HCT116 (cell line): ENCODE measurements at regions of chr11 and their contacts with region 1.

Region 1: GRCh38 chr11:2930704-2931428 is 1.6 kb upstream of the PHLDA2 start:
- DNase-seq: peak; percentile 86
- ATAC-seq: peak; percentile 64
- H3K4me3 ChIP-seq: peak overlapping the region; percentile 61 to 93
- H3K27ac ChIP-seq: peak overlapping the region; percentile 99
- H3K4me1 ChIP-seq: peaks cover 43 to 69% of the 10 kb centered on the region in 2 experiments
- H3K27me3 ChIP-seq: no peaks in the 10 kb centered on the region
- CTCF ChIP-seq: peak in 2 of 3 experiments; percentile 89 to 94; a peak in 4 of 6 replicates
- POLR2A ChIP-seq: no peak
- RAD21 ChIP-seq: no peak

Region 2: GRCh38 chr11:2532704-2533586 is 397.9 kb before region 1 on chr11:
- CTCF ChIA-PET with region 1: interaction called, 28 read pairs
- POLR2A ChIA-PET with region 1: interaction called, 17 read pairs
- RAD21 ChIA-PET with region 1: interaction called, 3 to 6 read pairs
- intact Hi-C with region 1: loop called (anchors 1 kb)
- DNase-seq: peak; percentile 89
- ATAC-seq: peak; percentile 72
- H3K4me3 ChIP-seq: peak overlapping the region; percentile 42 to 65
- H3K27ac ChIP-seq: peak overlapping the region; percentile 97
- H3K4me1 ChIP-seq: peaks cover 24 to 32% of the 10 kb centered on the region in 2 experiments
- H3K27me3 ChIP-seq: no peaks in the 10 kb centered on the region
- CTCF ChIP-seq: peak in 2 of 3 experiments; percentile 98 to 100; a peak in 4 of 6 replicates
- POLR2A ChIP-seq: no peak
- RAD21 ChIP-seq: no peak

Region 3: DNA sequence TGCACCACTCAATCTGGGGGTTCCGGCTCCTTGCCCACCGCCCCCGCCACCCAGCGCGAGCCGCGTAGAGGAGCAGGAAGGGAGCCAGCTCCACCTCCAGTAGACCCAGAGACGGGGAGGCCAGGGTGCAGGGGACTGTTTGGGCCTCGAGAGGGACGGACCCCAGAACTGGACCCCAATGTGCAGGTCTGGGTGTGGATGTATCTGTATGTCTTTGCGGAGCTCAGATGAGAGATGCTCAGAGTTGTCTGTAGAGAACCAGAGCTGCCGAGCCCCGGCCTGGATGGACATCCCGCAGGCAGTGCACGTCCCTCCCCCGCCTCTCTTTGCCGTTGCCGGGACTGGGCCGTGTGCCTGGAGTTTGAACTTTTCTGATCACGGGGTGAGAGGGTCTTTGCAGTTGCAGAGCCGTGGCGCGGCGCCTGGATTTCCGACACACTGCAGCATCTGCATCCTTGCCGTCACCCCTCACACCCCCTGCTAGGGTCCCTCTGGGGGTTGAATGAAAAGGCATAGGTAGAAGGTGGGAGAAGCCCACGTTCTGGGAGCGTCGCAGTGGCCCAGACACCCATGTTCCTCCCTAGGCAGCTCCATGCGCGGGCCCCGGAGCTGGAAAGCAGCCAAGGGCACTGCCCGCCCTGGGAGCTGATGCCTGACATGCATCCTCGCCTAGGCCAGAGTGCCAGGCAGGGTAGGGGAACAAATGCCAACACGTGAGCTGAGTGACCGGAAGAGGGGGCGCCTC is 380.8 kb before region 1 on chr11:
- CTCF ChIA-PET with region 1: no interaction called
- POLR2A ChIA-PET with region 1: no interaction called
- RAD21 ChIA-PET with region 1: no interaction called
- intact Hi-C with region 1: no loop called
- DNase-seq: no peak
- ATAC-seq: no peak
- H3K4me3 ChIP-seq: no peak overlapping the region
- H3K27ac ChIP-seq: no peak overlapping the region
- H3K4me1 ChIP-seq: no peaks in the 10 kb centered on the region
- H3K27me3 ChIP-seq: no peaks in the 10 kb centered on the region
- CTCF ChIP-seq: no peak
- POLR2A ChIP-seq: no peak
- RAD21 ChIP-seq: no peak

Region 4: DNA sequence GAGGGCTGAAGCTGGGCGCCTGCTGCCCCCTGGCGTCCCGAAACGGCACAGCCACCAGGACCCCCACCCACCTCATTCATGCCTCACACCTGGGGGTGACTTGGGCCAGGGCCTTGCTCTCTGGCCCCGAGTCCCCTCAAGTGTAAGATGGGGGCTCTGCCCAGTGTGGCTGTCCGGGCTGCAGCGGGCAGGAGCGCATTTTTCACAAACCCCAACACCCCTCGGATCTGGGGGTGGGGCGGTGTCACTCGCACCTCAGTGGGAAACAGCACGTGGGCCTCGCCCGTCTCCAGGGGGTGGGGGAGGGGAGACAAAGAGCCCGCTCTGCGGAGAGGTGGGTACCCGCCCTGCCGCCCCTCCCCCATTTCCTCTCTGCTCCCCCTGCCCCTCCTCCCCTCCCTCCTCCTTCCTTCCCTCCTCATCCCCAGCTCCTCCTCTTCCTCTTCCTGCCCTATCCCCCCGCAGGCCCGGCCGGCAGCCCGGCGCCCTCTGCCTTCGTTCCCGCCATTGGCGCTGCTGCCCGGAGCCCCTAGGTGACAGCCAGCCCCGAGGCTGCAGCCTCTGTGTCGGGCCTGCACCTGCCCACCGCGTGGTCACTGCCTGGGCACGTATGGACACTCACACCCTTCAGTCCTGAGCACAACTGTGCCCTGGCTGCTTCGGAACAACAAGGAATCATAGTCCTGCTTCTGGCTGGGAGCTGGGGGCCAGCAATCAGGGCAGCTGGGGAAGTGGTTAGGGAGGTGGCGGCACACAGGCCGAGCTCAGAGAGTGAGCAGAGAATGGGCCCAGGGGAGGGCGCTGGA is 38.4 kb before region 1 on chr11:
- CTCF ChIA-PET with region 1: interaction called, 58 read pairs
- POLR2A ChIA-PET with region 1: interaction called, 50 read pairs
- RAD21 ChIA-PET with region 1: interaction called, 6 to 11 read pairs
- intact Hi-C with region 1: loop called (anchors 2 kb)
- DNase-seq: no peak
- ATAC-seq: peak; percentile 65
- H3K4me3 ChIP-seq: peak overlapping the region; percentile 50 to 72
- H3K27ac ChIP-seq: peak overlapping the region; percentile 75
- H3K4me1 ChIP-seq: peaks cover 31 to 58% of the 10 kb centered on the region in 2 experiments
- H3K27me3 ChIP-seq: no peaks in the 10 kb centered on the region
- CTCF ChIP-seq: peak in 2 of 3 experiments; percentile 95 to 96; a peak in 4 of 6 replicates
- POLR2A ChIP-seq: peak; percentile 64
- RAD21 ChIP-seq: no peak

Region 5: DNA sequence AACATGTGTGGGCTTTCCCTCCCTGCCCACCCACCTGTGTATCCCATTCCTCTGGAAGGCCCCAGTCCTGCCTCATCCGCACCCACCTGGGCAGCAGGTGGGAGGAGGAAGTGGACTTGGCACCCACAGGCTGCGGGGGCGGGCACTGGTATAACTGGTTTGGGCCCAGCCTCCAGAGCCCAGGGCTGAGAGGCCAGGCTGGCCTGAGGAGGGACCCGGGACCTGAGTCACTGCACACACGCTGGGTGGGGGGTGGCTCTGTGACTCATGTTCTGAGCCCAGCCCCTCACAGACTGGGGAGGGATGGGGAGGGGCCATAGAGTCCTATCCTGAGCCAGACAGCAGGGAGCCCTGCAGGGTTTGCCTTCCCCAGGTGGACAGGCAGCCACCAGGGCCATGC is 18.4 kb before region 1 on chr11:
- CTCF ChIA-PET with region 1: interaction called, 3 read pairs
- POLR2A ChIA-PET with region 1: interaction called, 44 read pairs
- RAD21 ChIA-PET with region 1: no interaction called
- intact Hi-C with region 1: no loop called
- DNase-seq: peak; percentile 87
- ATAC-seq: peak; percentile 86
- H3K4me3 ChIP-seq: peak overlapping the region; percentile 37 to 54
- H3K27ac ChIP-seq: peak overlapping the region; percentile 97
- H3K4me1 ChIP-seq: peaks cover 49 to 55% of the 10 kb centered on the region in 2 experiments
- H3K27me3 ChIP-seq: no peaks in the 10 kb centered on the region
- CTCF ChIP-seq: no peak
- POLR2A ChIP-seq: no peak
- RAD21 ChIP-seq: no peak

Region 6: GRCh38 chr11:3217676-3218482 is 287.0 kb after region 1 on chr11:
- CTCF ChIA-PET with region 1: interaction called, 3 read pairs
- POLR2A ChIA-PET with region 1: interaction called, 3 read pairs
- RAD21 ChIA-PET with region 1: no interaction called
- intact Hi-C with region 1: loop called (anchors 5 kb)
- DNase-seq: no peak
- ATAC-seq: no peak
- H3K4me3 ChIP-seq: no peak overlapping the region
- H3K27ac ChIP-seq: no peak overlapping the region
- H3K4me1 ChIP-seq: peaks cover 5 to 12% of the 10 kb centered on the region in 2 experiments
- H3K27me3 ChIP-seq: no peaks in the 10 kb centered on the region
- CTCF ChIP-seq: no peak
- POLR2A ChIP-seq: no peak
- RAD21 ChIP-seq: no peak

Region 7: GRCh38 chr11:3797329-3798095 is 866.6 kb after region 1 on chr11 and contains the start of gene NUP98:
- CTCF ChIA-PET with region 1: no interaction called
- POLR2A ChIA-PET with region 1: no interaction called
- RAD21 ChIA-PET with region 1: no interaction called
- intact Hi-C with region 1: no loop called
- DNase-seq: peak; percentile 99
- ATAC-seq: peak; percentile 96
- H3K4me3 ChIP-seq: peak within 1 kb of the TSS; percentile 86 to 100
- H3K27ac ChIP-seq: peak within 1 kb of the TSS; percentile 85
- H3K4me1 ChIP-seq: peaks cover 14 to 28% of the 10 kb centered on the region in 2 experiments
- H3K27me3 ChIP-seq: no peaks in the 10 kb centered on the region
- CTCF ChIP-seq: no peak
- POLR2A ChIP-seq: peak; percentile 80
- RAD21 ChIP-seq: no peak
- total RNA-seq, gene NUP98: 98.4 TPM